PC-3 (cell line): ENCODE measurements at regions of chr1 and their contacts with region 1.

Region 1: GRCh38 chr1:198465201-198466144 is 75.0 kb downstream of the ATP6V1G3 start:
- DNase-seq: peak; percentile 74
- ATAC-seq: peak; percentile 48
- H3K4me3 ChIP-seq: no peak overlapping the region
- H3K27ac ChIP-seq: peak overlapping the region; percentile 17; the same call in 1 of the 2 replicates
- H3K4me1 ChIP-seq: peaks cover 29% of the 10 kb centered on the region
- H3K27me3 ChIP-seq: no peaks in the 10 kb centered on the region
- CTCF ChIP-seq: peak; percentile 73

Region 2: DNA sequence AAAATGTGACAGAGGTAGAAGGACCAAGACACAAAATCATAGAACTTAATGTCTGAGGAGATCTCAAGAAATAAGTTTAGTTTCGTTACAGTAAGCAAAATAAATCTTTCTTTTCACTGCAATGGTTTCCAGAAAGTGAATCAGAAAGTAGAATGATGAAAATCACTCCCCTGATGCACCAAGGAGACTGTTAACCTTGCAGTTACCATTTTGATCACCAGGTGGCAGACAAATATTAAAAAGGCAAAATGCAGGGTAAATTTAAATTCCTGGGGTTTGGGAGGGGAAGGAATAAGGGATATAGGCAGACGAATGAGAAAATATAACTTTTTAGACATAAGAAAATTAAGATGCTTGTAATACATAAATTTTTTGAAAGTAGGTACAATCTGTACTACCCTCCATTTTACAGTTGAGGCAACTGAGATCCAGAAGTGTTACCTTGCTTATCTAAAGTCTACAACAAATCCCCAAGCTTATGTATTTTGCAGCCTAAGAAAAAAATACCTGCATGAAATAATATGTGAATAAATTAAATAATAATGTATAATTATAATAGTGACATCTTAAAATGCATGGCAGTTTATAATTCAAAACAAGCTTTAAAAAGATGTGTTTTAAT is 944.2 kb before region 1 on chr1:
- CTCF ChIA-PET with region 1: no interaction called
- POLR2A ChIA-PET with region 1: no interaction called
- intact Hi-C with region 1: loop called (anchors 10 kb)
- DNase-seq: peak; percentile 60
- ATAC-seq: 0 out of 2 replicates have a peak, but pooled peaks have one; percentile 27
- H3K4me3 ChIP-seq: no peak overlapping the region
- H3K27ac ChIP-seq: no peak overlapping the region
- H3K4me1 ChIP-seq: no peaks in the 10 kb centered on the region
- H3K27me3 ChIP-seq: no peaks in the 10 kb centered on the region
- CTCF ChIP-seq: peak; percentile 72

Region 3: GRCh38 chr1:198088360-198089071 is 377.0 kb before region 1 on chr1:
- CTCF ChIA-PET with region 1: no interaction called
- POLR2A ChIA-PET with region 1: no interaction called
- intact Hi-C with region 1: loop called (anchors 1 kb)
- DNase-seq: peak; percentile 56
- ATAC-seq: peak; percentile 55
- H3K4me3 ChIP-seq: no peak overlapping the region
- H3K27ac ChIP-seq: no peak overlapping the region
- H3K4me1 ChIP-seq: no peaks in the 10 kb centered on the region
- H3K27me3 ChIP-seq: no peaks in the 10 kb centered on the region
- CTCF ChIP-seq: peak; percentile 78

Region 4: GRCh38 chr1:198206287-198206686 is 259.2 kb before region 1 on chr1:
- CTCF ChIA-PET with region 1: no interaction called
- POLR2A ChIA-PET with region 1: no interaction called
- intact Hi-C with region 1: loop called (anchors 1 kb)
- DNase-seq: no peak
- ATAC-seq: no peak
- H3K4me3 ChIP-seq: no peak overlapping the region
- H3K27ac ChIP-seq: no peak overlapping the region
- H3K4me1 ChIP-seq: no peaks in the 10 kb centered on the region
- H3K27me3 ChIP-seq: no peaks in the 10 kb centered on the region
- CTCF ChIP-seq: no peak; the same call in 1 of the 2 replicates

Region 5: DNA sequence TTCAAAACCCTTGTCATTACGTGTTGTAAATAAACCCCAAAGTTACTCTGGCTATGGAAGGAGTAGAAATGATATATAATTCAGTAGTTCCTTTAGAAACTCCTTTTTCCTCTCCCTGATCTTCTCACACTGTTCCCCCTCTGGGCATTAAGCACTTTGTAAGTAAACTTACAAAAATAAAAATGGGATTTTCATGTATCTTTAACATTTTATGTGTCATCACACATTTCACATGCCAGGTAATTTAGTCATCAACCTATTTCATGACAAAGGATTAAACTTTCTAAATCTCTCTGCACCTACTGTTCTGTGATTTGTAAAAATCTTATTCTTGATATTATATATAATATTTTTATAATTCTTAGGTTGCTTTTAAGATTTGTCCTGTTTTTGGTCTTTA is 131.7 kb before region 1 on chr1:
- CTCF ChIA-PET with region 1: no interaction called
- POLR2A ChIA-PET with region 1: no interaction called
- intact Hi-C with region 1: loop called (anchors 10 kb)
- DNase-seq: peak; percentile 65
- ATAC-seq: peak; percentile 64
- H3K4me3 ChIP-seq: no peak overlapping the region
- H3K27ac ChIP-seq: no peak overlapping the region
- H3K4me1 ChIP-seq: peaks cover 15% of the 10 kb centered on the region
- H3K27me3 ChIP-seq: no peaks in the 10 kb centered on the region
- CTCF ChIP-seq: no peak

Region 6: GRCh38 chr1:198497346-198498102 is 32.1 kb after region 1 on chr1:
- CTCF ChIA-PET with region 1: no interaction called
- POLR2A ChIA-PET with region 1: no interaction called
- intact Hi-C with region 1: no loop called
- DNase-seq: peak; percentile 53
- ATAC-seq: peak; percentile 35
- H3K4me3 ChIP-seq: no peak overlapping the region
- H3K27ac ChIP-seq: peak overlapping the region; percentile 63
- H3K4me1 ChIP-seq: peaks cover 42% of the 10 kb centered on the region
- H3K27me3 ChIP-seq: no peaks in the 10 kb centered on the region
- CTCF ChIP-seq: no peak